Motor neuron (in vitro differentiated cells): ENCODE measurements at regions of chrX and their contacts with region 1.

Region 1: DNA sequence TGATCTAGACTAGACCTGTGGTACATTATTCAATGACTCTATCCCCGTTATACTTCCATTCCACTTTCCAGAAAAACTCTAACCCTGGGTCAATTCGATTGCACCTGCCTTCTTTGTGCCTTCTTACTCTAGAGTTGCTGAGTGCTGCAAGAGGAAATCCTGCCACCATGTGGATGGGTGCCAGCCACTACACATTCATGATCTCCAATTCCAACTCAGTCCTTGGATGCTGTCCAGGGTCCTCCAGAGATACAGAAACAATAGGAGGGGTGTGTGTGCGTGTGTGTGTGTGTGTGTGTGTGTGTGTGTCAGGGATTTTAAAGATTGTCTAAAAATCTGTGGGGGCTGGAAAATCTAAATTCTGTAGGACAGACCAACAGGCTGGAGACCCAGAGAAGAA is 42.9 kb upstream of the INTS6L start:
- ATAC-seq: peak; percentile 40 to 80 (median 66)
- H3K4me3 ChIP-seq: no peak overlapping the region
- H3K27ac ChIP-seq: no peak overlapping the region
- H3K4me1 ChIP-seq: no peaks in the 10 kb centered on the region

Region 2: DNA sequence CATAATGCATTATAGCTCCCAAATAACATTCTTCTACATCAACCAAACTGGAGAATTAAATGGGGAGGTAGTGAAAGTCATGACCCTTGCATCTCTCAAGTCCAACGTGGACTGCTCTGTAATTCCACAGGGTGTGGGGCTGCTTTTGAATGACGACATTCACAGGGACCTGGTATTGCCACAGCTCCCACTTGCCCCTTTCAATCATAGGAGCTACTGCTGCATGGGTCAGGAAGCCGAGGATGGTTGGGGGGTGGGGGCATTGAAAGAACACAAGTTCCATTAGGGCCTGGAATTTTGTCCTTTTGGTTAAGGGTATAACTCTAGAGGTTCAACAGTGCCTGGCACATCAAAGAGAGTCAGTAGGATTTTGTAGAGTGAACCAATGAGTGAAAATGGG is 298.9 kb before region 1 on chrX:
- in situ Hi-C with region 1: no loop called
- ATAC-seq: no peak
- H3K4me3 ChIP-seq: no peak overlapping the region
- H3K27ac ChIP-seq: no peak overlapping the region
- H3K4me1 ChIP-seq: no peaks in the 10 kb centered on the region

Region 3: GRCh38 chrX:135625995-135626394 is 148.4 kb after region 1 on chrX:
- in situ Hi-C with region 1: loop called in 1 of 9 experiments (anchors 25 kb)
- ATAC-seq: no peak
- H3K4me3 ChIP-seq: no peak overlapping the region
- H3K27ac ChIP-seq: no peak overlapping the region
- H3K4me1 ChIP-seq: no peaks in the 10 kb centered on the region